Activated T-helper 1 cell treated with anti-CD3 and anti-CD28 coated beads, Interleukin-12 subunit alpha, Interleukin-12 subunit beta, Interleukin-2, Interleukin-4 antibody, amounts not matched to agents 30 ng/mL and 10 ng/mL and 1 ng/mL, durations not matched to agents 14 hours and 24 hours and 36 hours (primary cell): ENCODE measurements at regions of chr5 and their contacts with region 1.

Region 1: GRCh38 chr5:82356808-82357671 is 78.9 kb upstream of the RPS23 start:
- DNase-seq: peak; percentile 78
- H3K4me3 Mint-ChIP-seq: peak overlapping the region; percentile 70
- H3K27ac Mint-ChIP-seq: peak overlapping the region; percentile 97
- H3K4me1 Mint-ChIP-seq: peaks cover 87% of the 10 kb centered on the region
- H3K27me3 Mint-ChIP-seq: no peaks in the 10 kb centered on the region

Region 2: GRCh38 chr5:82278095-82278918 is 78.7 kb before region 1 on chr5 and contains the start of gene RPS23:
- intact Hi-C with region 1: loop called (anchors 2 kb)
- DNase-seq: peak; percentile 81
- H3K4me3 Mint-ChIP-seq: peak within 1 kb of the TSS; percentile 92
- H3K27ac Mint-ChIP-seq: peak within 1 kb of the TSS; percentile 96
- H3K4me1 Mint-ChIP-seq: peaks cover 34% of the 10 kb centered on the region
- H3K27me3 Mint-ChIP-seq: no peaks in the 10 kb centered on the region
- total RNA-seq, gene RPS23: 2,220 and 2,235 TPM in 2 replicates

Region 3: GRCh38 chr5:82466986-82467561 is 110.0 kb after region 1 on chr5:
- intact Hi-C with region 1: loop called (anchors 2 kb)
- DNase-seq: no peak
- H3K4me3 Mint-ChIP-seq: no peak overlapping the region
- H3K27ac Mint-ChIP-seq: no peak overlapping the region
- H3K4me1 Mint-ChIP-seq: no peaks in the 10 kb centered on the region
- H3K27me3 Mint-ChIP-seq: no peaks in the 10 kb centered on the region

Region 4: DNA sequence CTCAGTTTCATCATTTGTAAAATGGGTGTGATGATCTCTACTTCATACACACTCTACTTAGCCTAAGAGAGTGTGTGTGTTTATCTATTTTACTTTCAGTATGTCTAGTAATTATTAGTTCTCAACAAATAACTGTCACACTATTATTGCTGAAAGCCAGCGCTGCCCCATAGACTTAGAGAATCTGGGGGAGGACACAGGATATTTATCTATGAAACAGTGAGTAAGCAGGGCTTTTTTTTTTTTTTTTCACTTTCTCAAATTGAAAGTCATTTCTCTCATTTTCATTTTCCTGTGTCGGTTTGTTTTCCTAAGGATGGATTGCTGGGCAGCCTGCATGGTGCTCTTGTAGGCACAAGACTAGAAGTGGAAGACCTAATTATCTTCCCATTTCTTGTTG is 169.5 kb after region 1 on chr5:
- intact Hi-C with region 1: loop called (anchors 5 kb)
- DNase-seq: no peak
- H3K4me3 Mint-ChIP-seq: no peak overlapping the region
- H3K27ac Mint-ChIP-seq: no peak overlapping the region
- H3K4me1 Mint-ChIP-seq: peaks cover 17% of the 10 kb centered on the region
- H3K27me3 Mint-ChIP-seq: no peaks in the 10 kb centered on the region

Region 5: GRCh38 chr5:82620957-82621600 is 264.0 kb after region 1 on chr5:
- intact Hi-C with region 1: loop called (anchors 1 kb)
- DNase-seq: no peak
- H3K4me3 Mint-ChIP-seq: no peak overlapping the region
- H3K27ac Mint-ChIP-seq: peak overlapping the region; percentile 26
- H3K4me1 Mint-ChIP-seq: peaks cover 11% of the 10 kb centered on the region
- H3K27me3 Mint-ChIP-seq: peaks cover 7% of the 10 kb centered on the region

Region 6: DNA sequence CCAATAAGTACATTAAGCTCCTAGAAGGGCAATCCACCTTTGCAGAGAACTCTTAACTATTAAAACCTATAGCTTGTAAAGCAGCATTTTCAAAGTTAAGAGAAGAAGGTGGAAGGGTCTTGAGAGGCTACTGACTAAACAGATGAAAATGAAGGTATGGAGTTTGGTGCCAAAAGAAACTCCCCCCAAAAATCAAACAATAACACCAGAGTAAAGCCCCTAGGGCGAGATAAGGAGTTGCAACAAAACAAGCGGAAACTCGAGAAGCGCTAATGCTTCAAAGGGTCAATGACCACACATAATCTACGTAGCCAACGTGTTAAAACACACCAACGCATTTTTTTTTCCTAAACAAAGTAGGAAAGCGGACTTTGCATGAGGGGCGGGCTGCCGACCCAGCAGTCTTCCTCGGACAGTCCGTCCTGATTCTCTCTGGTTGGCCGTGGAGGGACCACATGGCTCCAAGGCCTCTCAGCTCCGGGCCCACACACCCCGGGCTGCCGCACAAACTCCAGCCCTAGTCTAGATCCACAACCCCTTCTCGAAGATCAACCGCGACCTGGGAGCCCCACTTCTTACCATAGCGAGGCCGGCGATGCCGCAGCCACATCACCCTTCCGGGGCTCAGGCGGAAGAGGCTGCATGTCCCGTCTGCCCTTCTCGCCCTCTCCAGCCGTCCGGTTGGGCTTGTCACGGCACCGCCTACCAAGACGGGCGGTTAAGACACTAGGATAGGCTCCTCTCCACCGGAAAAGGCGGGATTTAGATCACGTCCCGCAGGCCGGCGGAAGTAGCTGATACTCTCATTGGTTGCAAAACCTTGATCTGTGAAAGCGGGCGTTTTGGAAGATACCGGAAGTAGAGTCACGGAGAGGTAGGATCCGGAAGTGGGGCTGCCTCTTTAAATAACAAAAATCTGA is 720.0 kb after region 1 on chr5 and contains the starts of genes TMEM167A and XRCC4:
- intact Hi-C with region 1: loop called (anchors 1 kb)
- DNase-seq: peak; percentile 93
- H3K4me3 Mint-ChIP-seq: peak within 1 kb of the TSS; percentile 100
- H3K27ac Mint-ChIP-seq: peak within 1 kb of the TSS; percentile 99
- H3K4me1 Mint-ChIP-seq: peaks cover 43% of the 10 kb centered on the region
- H3K27me3 Mint-ChIP-seq: no peaks in the 10 kb centered on the region
- total RNA-seq, gene TMEM167A: 84.6 and 96.2 TPM in 2 replicates
- total RNA-seq, gene XRCC4: 10.2 and 11.2 TPM in 2 replicates